ENCODE measurements at regions of chr7 and their contacts with region 1.

Region 1: GRCh38 chr7:51308265-51308664 is 8.3 kb downstream of the COBL start:
- DNase-seq: no peak
- ATAC-seq: peak in 5 of 8 donors; percentile 18 to 64 (median 43)
- H3K4me3 ChIP-seq: no peak overlapping the region
- H3K27ac ChIP-seq: peak overlapping the region in 5 of 10 donors; percentile 11 to 50 (median 35)
- H3K4me1 ChIP-seq: peaks cover 0 to 44% (median 12%) of the 10 kb centered on the region in 9 donors
- H3K27me3 ChIP-seq: no peaks in the 10 kb centered on the region
- CTCF ChIP-seq: no peak

Region 2: DNA sequence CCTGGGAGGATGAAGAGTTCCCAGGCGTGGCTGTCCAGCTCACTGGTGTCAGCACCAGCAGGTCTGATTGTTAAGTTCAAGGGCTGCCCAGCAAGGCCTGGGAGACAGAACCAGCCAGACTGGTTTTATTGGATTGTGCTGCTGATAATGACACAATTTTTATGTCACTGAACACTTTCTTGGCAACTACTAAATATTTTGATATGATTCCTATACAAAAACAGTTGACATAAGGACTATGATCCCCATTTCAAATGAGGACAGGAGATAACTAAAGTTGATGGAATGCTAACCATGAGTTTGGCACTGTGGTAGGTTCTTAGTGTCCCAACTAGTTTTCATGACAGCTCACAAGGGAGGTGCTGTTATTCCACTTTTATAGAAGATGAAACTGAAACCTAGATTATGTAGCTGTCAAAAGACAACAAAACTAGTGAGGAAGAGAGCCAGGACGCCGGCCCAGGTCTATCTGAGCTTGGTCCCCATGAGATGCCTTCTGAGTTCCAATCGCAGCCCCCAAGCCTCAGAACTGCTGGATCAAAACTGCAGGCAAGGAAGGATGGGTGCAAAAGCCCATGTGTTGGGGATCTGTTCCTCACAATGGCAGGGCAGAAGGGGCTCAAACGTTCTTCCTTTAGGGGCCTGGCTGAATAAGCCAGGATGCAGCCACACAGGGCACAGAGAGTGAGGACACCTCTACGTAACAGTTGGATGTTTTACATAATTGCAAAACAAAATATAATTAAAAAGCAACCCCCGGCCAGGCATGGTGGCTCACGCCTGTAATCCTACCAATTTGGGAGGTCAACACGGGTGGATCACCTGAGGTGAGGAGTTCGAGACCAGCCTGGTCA is 44.4 kb before region 1 on chr7:
- intact Hi-C with region 1: loop called in 1 of 10 experiments (anchors 5 kb)
- DNase-seq: no peak
- ATAC-seq: peak in 7 of 8 donors; percentile 37 to 89 (median 50)
- H3K4me3 ChIP-seq: no peak overlapping the region
- H3K27ac ChIP-seq: peak overlapping the region in 8 of 10 donors; percentile 30 to 81 (median 56)
- H3K4me1 ChIP-seq: peaks cover 0 to 55% (median 4%) of the 10 kb centered on the region in 9 donors
- H3K27me3 ChIP-seq: no peaks in the 10 kb centered on the region
- CTCF ChIP-seq: no peak

Measured in heart right ventricle (tissue), 16 donors.